Heart left ventricle (tissue), 16 donors: ENCODE measurements at regions of chr9 and their contacts with region 1.

Region 1: DNA sequence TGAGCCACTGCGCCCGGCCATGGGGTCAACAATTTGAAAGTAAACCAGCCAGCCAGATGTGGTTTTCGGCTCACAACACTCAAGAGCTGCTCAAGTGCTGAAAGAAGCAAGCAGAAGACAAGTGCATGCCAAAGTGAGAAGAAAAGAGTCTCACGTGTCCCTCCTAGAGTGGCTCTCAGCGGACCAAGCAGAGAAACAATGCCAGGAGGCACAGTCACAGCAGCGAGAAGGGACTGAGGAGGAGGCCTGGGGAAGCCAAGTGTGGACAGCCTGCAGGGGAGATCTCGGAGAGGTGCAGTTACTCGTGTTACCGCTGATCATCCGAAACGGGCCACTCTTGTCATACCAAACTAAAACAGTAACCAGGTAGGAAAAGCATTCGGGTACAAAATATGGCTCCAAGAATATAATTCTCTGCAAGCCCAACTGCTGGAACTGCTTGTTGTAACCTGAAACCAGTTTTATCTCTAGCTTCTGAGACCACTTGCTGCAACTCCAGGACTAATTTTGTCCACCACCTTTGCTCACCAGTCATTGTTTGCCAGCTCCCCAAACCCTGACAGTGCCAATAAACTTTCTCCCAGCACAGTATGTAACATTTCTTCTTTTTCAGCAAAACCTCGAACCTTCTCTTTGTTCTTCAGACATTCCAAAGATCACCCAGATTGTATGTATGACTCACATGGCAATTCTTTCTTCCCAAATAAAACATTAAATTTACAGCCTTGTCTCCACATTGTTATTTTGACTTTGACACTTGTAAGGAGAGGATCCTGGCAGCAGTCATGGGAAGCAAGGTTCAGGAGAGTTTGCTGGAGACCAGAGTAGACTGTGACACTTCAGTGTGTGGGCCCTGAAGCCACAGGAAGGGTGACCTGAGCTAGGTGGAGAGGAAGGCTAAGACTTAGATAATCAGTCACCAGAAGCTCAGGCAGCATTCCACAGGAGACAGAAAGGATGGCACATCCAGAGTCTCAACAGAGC is 6.3 kb downstream of the SLC35D2 start:
- DNase-seq: peak in 1 of 5 donors; percentile 32
- ATAC-seq: peak; percentile 47 to 77 (median 63)
- H3K4me3 ChIP-seq: peak overlapping the region in 3 of 12 donors; percentile 4 to 16 (median 8)
- H3K27ac ChIP-seq: peak overlapping the region in 10 of 12 donors; percentile 31 to 69 (median 60)
- H3K4me1 ChIP-seq: peaks cover 0 to 30% (median 10%) of the 10 kb centered on the region in 12 donors
- H3K27me3 ChIP-seq: no peaks in the 10 kb centered on the region
- CTCF ChIP-seq: no peak
- POLR2A ChIP-seq: no peak

Region 2: GRCh38 chr9:96217294-96217707 is 159.9 kb before region 1 on chr9:
- intact Hi-C with region 1: no loop called
- DNase-seq: peak in 1 of 5 donors; percentile 37
- ATAC-seq: peak; percentile 14 to 39 (median 28)
- H3K4me3 ChIP-seq: peak overlapping the region in 5 of 12 donors; percentile 14 to 52 (median 37)
- H3K27ac ChIP-seq: peak overlapping the region in 5 of 12 donors; percentile 7 to 76 (median 47)
- H3K4me1 ChIP-seq: peaks cover 0 to 33% (median 15%) of the 10 kb centered on the region in 12 donors
- H3K27me3 ChIP-seq: peaks cover 0 to 35% (median 7%) of the 10 kb centered on the region in 9 donors
- CTCF ChIP-seq: no peak
- POLR2A ChIP-seq: no peak

Region 3: DNA sequence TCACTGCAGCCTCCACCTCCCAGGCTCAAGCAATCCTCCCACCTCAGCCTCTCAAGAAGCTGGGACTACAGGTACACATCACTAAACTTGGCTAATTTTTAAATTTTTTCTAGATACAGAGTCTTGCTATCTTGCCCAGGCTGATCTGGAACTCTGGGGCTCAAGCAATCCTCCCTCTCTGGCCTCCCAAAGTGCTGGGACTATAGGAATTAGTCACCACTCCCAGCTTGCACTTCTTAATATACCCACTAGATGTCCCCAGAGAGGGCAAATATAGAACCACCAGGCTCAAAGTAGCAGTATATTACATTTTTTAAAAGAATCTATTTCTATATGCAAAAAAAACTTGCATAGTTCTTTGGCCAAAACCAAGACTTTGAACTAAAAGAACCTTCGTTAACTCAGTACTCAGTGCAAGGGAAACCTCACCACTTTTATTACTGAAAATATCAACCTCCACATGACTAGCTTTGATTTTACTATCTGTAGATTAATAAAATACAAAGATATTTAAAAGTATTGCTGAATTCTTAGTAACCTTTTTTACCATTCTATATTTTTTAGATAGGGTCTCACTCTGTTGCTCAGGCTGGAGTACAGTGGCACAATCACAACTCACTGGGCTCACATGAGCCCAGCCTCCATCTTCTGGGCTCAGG is 49.4 kb before region 1 on chr9:
- intact Hi-C with region 1: loop called in 1 of 10 experiments (anchors 5 kb)
- DNase-seq: peak in 1 of 5 donors; percentile 24
- ATAC-seq: peak; percentile 40 to 83 (median 68)
- H3K4me3 ChIP-seq: no peak overlapping the region
- H3K27ac ChIP-seq: no peak overlapping the region
- H3K4me1 ChIP-seq: peaks cover 0 to 5% (median 0%) of the 10 kb centered on the region in 12 donors
- H3K27me3 ChIP-seq: no peaks in the 10 kb centered on the region
- CTCF ChIP-seq: peak; percentile 77 to 89 (median 85)
- POLR2A ChIP-seq: no peak

Region 4: GRCh38 chr9:96425500-96426169 is 48.5 kb after region 1 on chr9:
- intact Hi-C with region 1: no loop called
- DNase-seq: no peak
- ATAC-seq: no peak
- H3K4me3 ChIP-seq: no peak overlapping the region
- H3K27ac ChIP-seq: no peak overlapping the region
- H3K4me1 ChIP-seq: peaks cover 0 to 9% (median 8%) of the 10 kb centered on the region in 12 donors
- H3K27me3 ChIP-seq: no peaks in the 10 kb centered on the region
- CTCF ChIP-seq: no peak
- POLR2A ChIP-seq: no peak